Caco-2 (cell line): ENCODE measurements at regions of chr13 and their contacts with region 1.

Region 1: DNA sequence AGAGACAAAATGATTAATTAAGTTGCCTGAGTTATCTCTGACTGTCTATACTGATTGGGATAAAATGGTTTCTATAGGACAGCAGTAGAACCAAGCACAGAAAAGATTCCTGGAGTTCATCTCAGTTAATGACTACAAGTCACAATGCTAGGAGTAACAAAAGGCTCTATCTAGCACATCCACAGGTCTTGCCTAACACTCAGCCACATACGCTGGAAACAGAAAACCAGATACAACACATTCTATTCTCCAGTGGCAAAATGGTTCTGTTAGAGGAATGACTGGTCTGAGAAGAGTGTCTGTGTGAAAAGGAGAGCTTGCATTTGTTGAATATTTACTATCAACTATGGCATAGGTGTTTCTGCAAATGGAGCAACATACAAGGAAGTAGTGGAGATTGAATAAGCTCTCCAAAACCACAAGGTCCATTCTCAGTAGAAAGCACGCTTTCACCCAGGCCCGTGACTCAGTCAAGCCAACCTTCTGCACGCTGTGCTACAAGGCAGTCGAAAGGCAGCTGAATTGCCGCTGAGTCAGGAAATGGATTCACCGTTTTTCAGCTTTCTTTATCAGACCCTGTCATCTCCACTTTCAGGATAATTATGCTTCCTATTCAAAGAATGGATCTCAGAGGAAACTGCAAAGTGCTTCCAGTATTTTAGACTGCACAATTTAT is 761.5 kb downstream of the EFNB2 start:
- DNase-seq: peak; percentile 8 to 38
- H3K4me3 ChIP-seq: no peak overlapping the region
- H3K4me3 Mint-ChIP-seq: peak overlapping the region; percentile 44
- H3K27ac Mint-ChIP-seq: peak overlapping the region; percentile 39
- H3K4me1 ChIP-seq: peaks cover 38% of the 10 kb centered on the region
- H3K4me1 Mint-ChIP-seq: peaks cover 33% of the 10 kb centered on the region
- H3K27me3 ChIP-seq: no peaks in the 10 kb centered on the region
- H3K27me3 Mint-ChIP-seq: no peaks in the 10 kb centered on the region
- CTCF ChIP-seq: no peak

Region 2: DNA sequence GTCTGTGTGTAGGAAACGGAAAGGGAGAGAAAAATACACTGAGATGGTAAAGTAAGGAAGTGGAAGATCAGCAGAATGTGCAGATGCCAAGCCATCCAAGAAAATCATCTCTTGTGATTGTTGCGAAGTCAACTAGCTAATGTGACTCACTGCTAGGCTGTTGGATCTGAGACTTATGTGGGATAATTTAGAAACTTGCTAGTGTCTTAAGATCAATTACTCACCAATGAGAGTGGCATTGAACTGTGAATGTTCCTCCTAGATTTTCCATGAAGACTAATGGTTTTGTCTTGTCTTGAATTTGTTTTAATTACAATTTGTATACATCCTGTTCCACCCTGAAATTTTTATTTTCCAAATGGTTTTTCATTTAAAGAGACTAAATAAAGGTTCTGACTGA is 10.2 kb before region 1 on chr13:
- CTCF ChIA-PET with region 1: no interaction called
- POLR2A ChIA-PET with region 1: no interaction called
- intact Hi-C with region 1: loop called (anchors 1 kb)
- DNase-seq: no peak
- H3K4me3 ChIP-seq: no peak overlapping the region
- H3K4me3 Mint-ChIP-seq: no peak overlapping the region
- H3K27ac Mint-ChIP-seq: no peak overlapping the region
- H3K4me1 ChIP-seq: no peaks in the 10 kb centered on the region
- H3K4me1 Mint-ChIP-seq: no peaks in the 10 kb centered on the region
- H3K27me3 ChIP-seq: no peaks in the 10 kb centered on the region
- H3K27me3 Mint-ChIP-seq: no peaks in the 10 kb centered on the region
- CTCF ChIP-seq: no peak